ENCODE measurements at regions of chr22 and their contacts with region 1.

Region 1: DNA sequence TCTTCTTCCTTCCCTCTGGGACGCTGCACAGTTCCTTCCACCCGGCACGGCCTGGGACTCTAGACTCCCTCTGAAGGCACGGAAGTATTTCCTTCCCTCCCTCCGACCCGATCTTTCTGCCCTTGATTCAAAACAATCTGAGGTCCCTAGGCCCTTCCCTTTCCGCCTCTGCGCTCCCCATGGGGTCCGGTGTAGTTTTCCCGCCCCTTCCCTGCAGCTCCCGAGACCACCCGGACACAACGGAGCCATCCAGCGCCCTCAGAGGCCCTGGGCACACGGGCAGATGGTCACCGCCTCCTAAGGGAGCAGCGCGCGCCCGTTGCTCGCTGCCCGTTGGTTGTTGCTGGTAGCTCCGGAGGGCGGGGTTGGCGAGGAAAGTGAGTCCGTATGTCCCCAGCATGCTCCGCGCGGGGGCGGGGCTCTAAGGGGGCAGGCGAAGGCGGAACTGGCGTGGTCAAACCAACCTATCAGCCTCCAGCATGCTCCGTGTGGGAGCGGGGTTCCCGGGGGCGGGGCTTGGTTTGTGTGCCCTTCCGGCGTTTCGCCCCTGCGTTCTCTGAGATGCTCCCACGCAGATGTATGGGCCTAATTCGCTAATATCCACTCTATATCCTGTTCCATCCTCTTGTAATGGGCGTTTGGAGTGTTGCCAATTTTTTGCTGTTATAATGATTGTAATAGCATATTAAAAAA is 19.6 kb downstream of the MIF start:
- DNase-seq: peak; percentile 100
- H3K4me3 Mint-ChIP-seq: peak overlapping the region; percentile 99
- H3K27ac Mint-ChIP-seq: peak overlapping the region; percentile 99
- H3K4me1 Mint-ChIP-seq: peaks cover 24% of the 10 kb centered on the region
- H3K27me3 Mint-ChIP-seq: no peaks in the 10 kb centered on the region

Region 2: DNA sequence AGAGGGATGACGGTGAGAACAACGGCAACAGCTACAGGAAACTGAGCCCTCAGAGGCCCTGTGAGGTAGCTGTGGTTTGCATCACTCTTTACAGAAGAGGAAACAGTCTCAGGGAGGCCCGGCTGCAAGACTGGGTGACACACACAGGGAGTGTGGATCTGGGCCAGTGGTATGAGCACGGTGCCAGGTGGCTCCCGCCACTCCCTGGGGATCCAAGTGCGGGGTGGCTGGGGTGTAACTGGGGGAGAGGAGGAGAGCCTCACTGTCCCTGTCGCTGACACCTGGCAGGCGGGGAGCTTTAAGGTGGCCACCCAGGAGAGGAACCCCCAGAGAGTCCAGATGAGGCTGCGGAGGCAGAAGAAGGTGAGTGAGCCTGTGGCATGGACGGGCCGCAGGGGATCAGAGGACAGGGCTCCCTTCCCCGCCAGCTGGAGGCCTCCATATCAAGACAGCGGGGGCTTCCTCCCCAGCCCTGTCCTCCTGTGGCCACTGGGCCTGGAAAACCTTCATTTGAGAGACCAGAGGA is 217.4 kb before region 1 on chr22:
- CTCF ChIA-PET with region 1: no interaction called
- intact Hi-C with region 1: loop called (anchors 1 kb)
- DNase-seq: peak; percentile 94
- H3K4me3 Mint-ChIP-seq: peak overlapping the region; percentile 93
- H3K27ac Mint-ChIP-seq: peak overlapping the region; percentile 100
- H3K4me1 Mint-ChIP-seq: peaks cover 46% of the 10 kb centered on the region
- H3K27me3 Mint-ChIP-seq: no peaks in the 10 kb centered on the region

Region 3: GRCh38 chr22:23838681-23839468 is 74.9 kb before region 1 on chr22 and contains the start of gene DERL3:
- CTCF ChIA-PET with region 1: no interaction called
- intact Hi-C with region 1: loop called (anchors 1 kb)
- DNase-seq: peak; percentile 97
- H3K4me3 Mint-ChIP-seq: peak within 1 kb of the TSS; percentile 84
- H3K27ac Mint-ChIP-seq: peak within 1 kb of the TSS; percentile 37
- H3K4me1 Mint-ChIP-seq: peaks cover 16% of the 10 kb centered on the region
- H3K27me3 Mint-ChIP-seq: peaks cover 3% of the 10 kb centered on the region
- total RNA-seq, gene DERL3: 7.3 to 7.5 TPM

Region 4: DNA sequence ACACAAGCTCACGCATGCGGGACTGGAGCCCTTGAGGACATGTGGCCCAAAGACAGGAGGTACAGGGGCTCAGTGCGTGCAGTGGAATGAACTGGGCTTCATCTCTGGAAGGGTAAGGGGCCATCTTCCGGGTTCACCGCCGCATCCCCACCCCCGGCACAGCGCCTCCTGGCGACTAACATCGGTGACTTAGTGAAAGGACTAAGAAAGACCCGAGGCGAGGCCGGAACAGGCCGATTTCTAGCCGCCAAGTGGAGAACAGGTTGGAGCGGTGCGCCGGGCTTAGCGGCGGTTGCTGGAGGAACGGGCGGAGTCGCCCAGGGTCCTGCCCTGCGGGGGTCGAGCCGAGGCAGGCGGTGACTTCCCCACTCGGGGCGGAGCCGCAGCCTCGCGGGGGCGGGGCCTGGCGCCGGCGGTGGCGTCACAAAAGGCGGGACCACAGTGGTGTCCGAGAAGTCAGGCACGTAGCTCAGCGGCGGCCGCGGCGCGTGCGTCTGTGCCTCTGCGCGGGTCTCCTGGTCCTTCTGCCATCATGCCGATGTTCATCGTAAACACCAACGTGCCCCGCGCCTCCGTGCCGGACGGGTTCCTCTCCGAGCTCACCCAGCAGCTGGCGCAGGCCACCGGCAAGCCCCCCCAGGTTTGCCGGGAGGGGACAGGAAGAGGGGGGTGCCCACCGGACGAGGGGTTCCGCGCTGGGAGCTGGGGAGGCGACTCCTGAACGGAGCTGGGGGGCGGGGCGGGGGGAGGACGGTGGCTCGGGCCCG is 19.7 kb before region 1 on chr22 and contains the start of gene MIF:
- CTCF ChIA-PET with region 1: interaction called, 11 read pairs
- intact Hi-C with region 1: loop called (anchors 1 kb)
- DNase-seq: peak; percentile 96
- H3K4me3 Mint-ChIP-seq: peak within 1 kb of the TSS; percentile 95
- H3K27ac Mint-ChIP-seq: peak within 1 kb of the TSS; percentile 97
- H3K4me1 Mint-ChIP-seq: peaks cover 19% of the 10 kb centered on the region
- H3K27me3 Mint-ChIP-seq: no peaks in the 10 kb centered on the region
- total RNA-seq, gene MIF: 1,489 to 1,512 TPM